ENCODE measurements at regions of chr17 and their contacts with region 1.

Region 1: DNA sequence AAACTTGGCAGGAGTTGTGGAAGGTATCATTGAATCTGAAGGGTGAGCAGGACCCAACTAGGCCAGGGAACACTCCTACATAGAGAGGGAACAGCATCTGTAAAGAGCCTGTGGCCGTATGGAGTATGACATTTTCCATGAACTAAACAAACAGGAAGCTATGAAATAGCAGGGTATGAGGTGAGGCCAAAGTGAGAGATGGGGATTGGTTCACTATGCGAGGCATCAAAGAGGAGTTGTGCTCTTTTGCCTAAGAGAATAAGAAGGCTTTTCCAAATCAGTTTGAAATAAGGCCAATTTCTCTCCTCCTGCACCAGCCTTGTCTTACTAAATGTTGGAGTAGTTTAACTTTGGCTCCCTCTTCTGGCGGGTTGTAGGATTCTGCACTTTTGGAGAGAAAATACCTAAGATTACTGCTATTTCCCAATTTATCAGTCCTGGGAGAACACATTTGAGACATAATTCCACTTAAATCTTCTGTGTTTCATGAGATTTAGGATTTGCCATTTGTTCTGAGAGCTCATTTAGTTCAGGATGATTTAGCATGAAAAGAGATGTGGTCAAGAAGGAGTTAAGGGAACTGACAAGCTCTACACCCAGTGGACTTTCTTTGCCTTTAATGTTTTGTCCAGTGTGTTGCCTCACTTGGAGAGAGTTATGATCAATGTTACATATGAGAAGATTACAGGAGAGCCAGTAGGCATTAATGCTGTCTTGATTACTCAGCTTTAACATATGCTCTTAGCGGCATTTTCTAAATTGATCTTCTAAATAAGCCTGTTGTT is 55.4 kb downstream of the TNRC6C start:
- DNase-seq: peak; percentile 29
- H3K4me3 ChIP-seq: no peak overlapping the region
- CTCF ChIP-seq: peak; percentile 55

Region 2: GRCh38 chr17:77507111-77507885 is 506.6 kb before region 1 on chr17:
- CTCF ChIA-PET with region 1: interaction called, 17 read pairs
- POLR2A ChIA-PET with region 1: no interaction called
- DNase-seq: no peak
- H3K4me3 ChIP-seq: no peak overlapping the region
- CTCF ChIP-seq: no peak

Region 3: DNA sequence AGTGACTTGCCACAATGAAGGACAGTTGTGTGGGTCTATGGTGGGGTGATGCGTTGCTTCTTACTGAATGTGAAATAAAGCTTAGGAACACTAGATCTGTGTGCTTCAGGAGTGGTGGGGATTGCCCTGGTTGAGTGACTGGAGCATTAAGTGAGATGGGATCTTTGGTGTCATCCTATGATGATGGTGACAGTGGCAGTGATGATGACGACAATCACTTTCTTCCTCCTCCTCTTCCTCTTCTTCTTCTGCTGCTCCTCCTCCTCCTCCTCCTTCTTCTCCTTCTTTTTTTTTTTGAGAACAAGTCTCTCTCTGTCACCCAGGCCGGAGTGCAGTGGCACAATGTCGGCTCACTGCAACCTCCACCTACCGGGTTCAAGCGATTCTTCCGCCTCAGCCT is 476.3 kb before region 1 on chr17:
- CTCF ChIA-PET with region 1: interaction called, 353 read pairs
- POLR2A ChIA-PET with region 1: no interaction called
- DNase-seq: no peak
- H3K4me3 ChIP-seq: no peak overlapping the region
- CTCF ChIP-seq: no peak

Region 4: DNA sequence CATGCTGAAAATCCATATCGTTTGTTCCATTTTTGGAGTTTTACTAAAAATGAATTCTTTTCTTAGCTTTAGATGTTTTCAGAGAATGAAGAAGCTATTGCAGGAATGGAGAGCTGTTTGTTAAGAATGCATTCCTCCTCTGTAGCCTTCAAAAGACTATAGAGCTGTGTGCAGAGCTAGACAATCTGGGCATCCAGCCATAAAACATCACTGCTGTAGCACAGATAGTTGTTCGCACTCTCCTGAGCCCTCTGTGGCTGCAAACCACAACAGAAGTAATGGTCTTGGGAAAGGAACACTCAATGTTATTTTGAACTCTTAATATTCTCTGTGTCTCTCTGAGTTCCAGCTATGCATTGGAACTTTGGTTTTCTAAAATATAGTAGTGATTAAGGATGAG is 50.4 kb before region 1 on chr17:
- CTCF ChIA-PET with region 1: interaction called, 14 read pairs
- POLR2A ChIA-PET with region 1: interaction called, 7 read pairs
- DNase-seq: peak; percentile 88
- H3K4me3 ChIP-seq: no peak overlapping the region
- CTCF ChIP-seq: no peak

Region 5: DNA sequence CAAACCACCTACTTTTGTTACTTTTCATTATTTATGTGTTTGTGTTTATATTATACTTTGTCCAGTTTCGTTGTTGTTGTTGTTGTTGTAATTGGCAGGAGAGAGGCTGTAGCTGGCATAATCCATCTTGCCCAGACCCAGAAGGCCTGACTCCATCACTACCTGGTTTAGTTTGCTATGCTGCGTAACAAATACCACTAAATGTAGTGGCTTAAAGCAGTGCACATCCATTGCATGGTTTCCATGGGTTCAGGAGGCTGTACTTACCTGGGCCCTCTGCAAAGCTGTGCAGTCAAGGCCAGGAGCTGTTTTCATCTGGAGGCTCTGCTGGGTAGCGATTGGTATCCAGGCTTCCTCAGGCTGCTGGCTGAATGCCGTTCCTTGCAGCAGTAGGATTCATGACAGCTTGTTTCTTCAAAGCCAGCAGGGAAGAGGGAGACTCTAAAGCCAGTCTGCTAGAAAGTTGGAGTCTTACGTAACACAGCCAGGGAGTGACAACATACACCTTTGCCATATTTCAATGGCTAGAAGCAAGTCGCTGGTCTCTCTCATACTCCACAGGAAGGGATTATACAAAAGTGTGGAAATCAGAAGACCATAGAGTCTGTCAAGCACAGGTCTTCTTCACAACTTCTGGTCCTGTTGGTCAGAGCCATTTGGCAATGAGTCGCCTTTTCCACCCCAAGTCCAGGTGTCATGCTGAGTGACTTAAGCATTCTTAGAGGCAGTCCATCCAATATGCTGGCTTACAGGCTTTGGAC is 14.3 kb before region 1 on chr17:
- CTCF ChIA-PET with region 1: interaction called, 129 read pairs
- POLR2A ChIA-PET with region 1: no interaction called
- DNase-seq: no peak
- H3K4me3 ChIP-seq: no peak overlapping the region
- CTCF ChIP-seq: no peak

Region 6: GRCh38 chr17:78040440-78041385 is 26.8 kb after region 1 on chr17:
- CTCF ChIA-PET with region 1: interaction called, 130 read pairs
- POLR2A ChIA-PET with region 1: no interaction called
- DNase-seq: no peak
- H3K4me3 ChIP-seq: peak overlapping the region; percentile 65
- CTCF ChIP-seq: no peak

Measured in AG04449 (cell line).